Psoas muscle (tissue), 8 donors: ENCODE measurements at regions of chr1 and their contacts with region 1.

Region 1: DNA sequence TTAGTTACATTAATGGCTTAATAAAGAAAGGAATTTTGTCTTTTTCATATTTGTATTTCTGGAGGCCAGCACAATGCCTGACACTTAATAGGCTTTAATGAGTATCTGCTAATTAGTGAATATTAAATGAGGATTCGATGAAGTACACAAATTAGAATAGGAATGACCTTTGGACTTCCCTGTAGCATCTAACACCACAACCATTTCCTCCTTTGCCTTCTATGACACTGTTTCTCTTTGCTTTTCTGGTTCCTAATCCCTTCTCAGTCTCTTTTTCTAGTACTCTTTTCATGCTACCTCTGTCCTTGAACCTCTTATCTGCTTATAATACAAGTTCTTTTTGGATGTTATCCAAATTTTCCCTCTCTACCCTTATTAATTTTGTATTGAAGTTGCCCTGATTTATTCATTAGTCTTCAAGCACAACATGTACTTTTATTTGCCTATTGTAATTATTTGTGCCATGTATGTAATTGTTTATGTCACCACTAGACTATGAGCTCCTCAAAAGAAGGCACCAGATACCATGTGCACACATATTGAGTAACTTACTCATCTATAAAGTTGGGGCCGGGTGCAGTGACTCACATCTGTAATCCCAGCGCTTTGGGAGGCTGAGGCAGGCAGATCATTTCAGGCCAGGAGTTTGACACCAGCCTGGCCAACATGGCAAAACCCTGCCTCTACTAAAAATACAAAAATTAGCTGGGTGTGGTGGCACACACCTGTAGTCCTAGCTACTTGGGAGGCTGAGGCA is 23.8 kb downstream of the RPS27 start:
- DNase-seq: no peak
- ATAC-seq: no peak
- H3K4me3 ChIP-seq: no peak overlapping the region
- H3K27ac ChIP-seq: no peak overlapping the region
- H3K4me1 ChIP-seq: no peaks in the 10 kb centered on the region
- H3K27me3 ChIP-seq: no peaks in the 10 kb centered on the region
- CTCF ChIP-seq: no peak

Region 2: DNA sequence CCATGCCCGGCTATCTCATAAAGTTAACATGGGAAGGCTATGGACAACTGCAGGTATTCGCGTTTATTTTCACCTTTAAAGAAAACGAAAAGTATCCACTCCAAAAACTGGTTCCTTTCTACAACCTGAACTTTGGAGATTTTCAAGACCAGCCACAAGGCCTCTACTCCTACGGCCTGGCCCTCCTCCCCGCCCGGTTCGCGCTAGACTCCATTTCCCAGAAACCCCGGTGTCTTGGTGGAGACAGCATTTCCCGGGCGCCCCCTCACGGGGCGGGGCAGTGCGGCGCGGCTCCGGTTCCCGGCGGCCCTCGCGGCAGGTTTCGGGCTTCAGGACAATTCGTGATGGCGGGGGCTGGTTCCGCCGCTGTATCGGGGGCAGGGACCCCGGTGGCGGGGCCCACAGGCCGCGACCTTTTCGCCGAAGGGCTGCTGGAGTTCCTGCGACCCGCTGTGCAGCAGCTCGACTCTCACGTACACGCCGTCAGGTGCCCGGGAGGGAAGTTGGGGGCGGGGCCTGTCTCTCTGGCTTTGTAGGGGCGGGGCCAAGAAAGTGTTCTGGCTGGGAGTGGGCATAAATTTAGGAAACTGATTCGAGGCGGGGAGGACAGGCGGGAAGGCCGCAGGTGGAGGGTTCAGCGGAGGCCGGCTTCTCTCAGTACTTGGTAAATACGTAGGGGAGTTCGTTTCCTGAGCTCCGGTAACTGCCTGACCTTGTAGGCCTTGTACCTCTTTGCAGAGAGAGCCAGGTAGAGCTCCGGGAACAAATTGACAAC is 355.7 kb before region 1 on chr1 and contains the start of gene SNAPIN:
- intact Hi-C with region 1: no loop called
- DNase-seq: peak; percentile 93 to 95
- ATAC-seq: peak; percentile 95 to 97 (median 96)
- H3K4me3 ChIP-seq: peak within 1 kb of the TSS; percentile 90
- H3K27ac ChIP-seq: peak within 1 kb of the TSS; percentile 95
- H3K4me1 ChIP-seq: peaks cover 9% of the 10 kb centered on the region
- H3K27me3 ChIP-seq: no peaks in the 10 kb centered on the region
- CTCF ChIP-seq: no peak
- total RNA-seq, gene SNAPIN: 53.9 to 72.0 (median 58.5) TPM

Region 3: DNA sequence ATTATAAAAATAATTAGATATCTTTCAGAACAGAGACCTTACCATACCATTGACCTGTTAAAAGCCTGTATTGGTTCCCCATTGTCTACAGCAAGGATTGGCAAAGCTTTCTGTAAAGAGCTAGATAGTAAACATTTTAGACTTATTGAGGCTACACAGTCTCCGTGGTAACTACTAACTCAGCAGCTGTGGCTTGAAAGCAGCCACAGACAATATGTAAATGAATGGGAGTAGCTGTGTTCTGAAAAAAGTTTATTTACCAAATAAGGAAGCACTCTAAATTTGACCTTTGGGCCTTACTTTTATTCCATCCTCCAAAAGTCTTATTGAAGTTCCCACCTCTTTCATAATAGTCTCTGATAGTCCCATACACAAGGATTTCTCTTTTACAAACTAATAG is 100.8 kb after region 1 on chr1:
- intact Hi-C with region 1: loop called in 1 of 2 experiments (anchors 10 kb)
- DNase-seq: no peak
- ATAC-seq: no peak
- H3K4me3 ChIP-seq: no peak overlapping the region
- H3K27ac ChIP-seq: no peak overlapping the region
- H3K4me1 ChIP-seq: no peaks in the 10 kb centered on the region
- H3K27me3 ChIP-seq: no peaks in the 10 kb centered on the region
- CTCF ChIP-seq: no peak

Region 4: GRCh38 chr1:154170547-154171222 is 156.4 kb after region 1 on chr1:
- intact Hi-C with region 1: no loop called
- DNase-seq: no peak
- ATAC-seq: peak in 1 of 4 donors; percentile 10
- H3K4me3 ChIP-seq: no peak overlapping the region
- H3K27ac ChIP-seq: peak overlapping the region; percentile 5
- H3K4me1 ChIP-seq: peaks cover 8% of the 10 kb centered on the region
- H3K27me3 ChIP-seq: no peaks in the 10 kb centered on the region
- CTCF ChIP-seq: no peak